ENCODE measurements at regions of chr7 and their contacts with region 1.

Region 1: GRCh38 chr7:116953727-116954442 is 584 bp downstream of the ST7 start:
- DNase-seq: peak in 7 of 9 experiments; percentile 1 to 80 (median 35)
- ATAC-seq: peak; percentile 69
- H3K4me3 ChIP-seq: peak overlapping the region; percentile 61 to 75
- H3K4me3 Mint-ChIP-seq: peak overlapping the region; percentile 93
- H3K27ac ChIP-seq: peak overlapping the region; percentile 49 to 69
- H3K27ac Mint-ChIP-seq: peak overlapping the region; percentile 83
- H3K4me1 ChIP-seq: peaks cover 15% of the 10 kb centered on the region
- H3K4me1 Mint-ChIP-seq: peaks cover 21% of the 10 kb centered on the region
- H3K27me3 ChIP-seq: no peaks in the 10 kb centered on the region
- H3K27me3 Mint-ChIP-seq: no peaks in the 10 kb centered on the region
- CTCF ChIP-seq: no peak

Region 2: GRCh38 chr7:116862234-116862950 is 91.5 kb before region 1 on chr7 and contains the start of gene CAPZA2:
- CTCF ChIA-PET with region 1: no interaction called
- POLR2A ChIA-PET with region 1: no interaction called
- intact Hi-C with region 1: loop called (anchors 1 to 2 kb)
- DNase-seq: peak; percentile 88 to 97 (median 95)
- ATAC-seq: peak; percentile 89
- H3K4me3 ChIP-seq: peak within 1 kb of the TSS; percentile 73 to 79
- H3K4me3 Mint-ChIP-seq: peak within 1 kb of the TSS; percentile 96
- H3K27ac ChIP-seq: peak within 1 kb of the TSS; percentile 77 to 82
- H3K27ac Mint-ChIP-seq: peak within 1 kb of the TSS; percentile 96
- H3K4me1 ChIP-seq: peaks cover 15% of the 10 kb centered on the region
- H3K4me1 Mint-ChIP-seq: peaks cover 44% of the 10 kb centered on the region
- H3K27me3 ChIP-seq: no peaks in the 10 kb centered on the region
- H3K27me3 Mint-ChIP-seq: peaks cover 7% of the 10 kb centered on the region
- CTCF ChIP-seq: peak; percentile 42
- total RNA-seq, gene CAPZA2: 92.6 to 101 TPM

Measured in CD8-positive, alpha-beta T cell (primary cell).